ENCODE measurements at regions of chr5 and their contacts with region 1.

Region 1: GRCh38 chr5:170986598-170986997 is 124.8 kb downstream of the RANBP17 start:
- DNase-seq: no peak
- ATAC-seq: no peak
- H3K4me3 ChIP-seq: no peak overlapping the region
- H3K27ac ChIP-seq: no peak overlapping the region
- H3K4me1 ChIP-seq: no peaks in the 10 kb centered on the region
- H3K27me3 ChIP-seq: no peaks in the 10 kb centered on the region
- CTCF ChIP-seq: 0 out of 2 replicates have a peak, but pooled peaks have one; percentile 3
- EP300 ChIP-seq: no peak
- POLR2A ChIP-seq: no peak
- RAD21 ChIP-seq: no peak

Region 2: GRCh38 chr5:170769246-170769645 is 217.4 kb before region 1 on chr5:
- CTCF ChIA-PET with region 1: no interaction called
- POLR2A ChIA-PET with region 1: no interaction called
- in situ Hi-C with region 1: no loop called
- intact Hi-C with region 1: loop called (anchors 5 kb)
- DNase-seq: no peak
- ATAC-seq: no peak
- H3K4me3 ChIP-seq: no peak overlapping the region
- H3K27ac ChIP-seq: no peak overlapping the region
- H3K4me1 ChIP-seq: no peaks in the 10 kb centered on the region
- H3K27me3 ChIP-seq: peaks cover 1 to 5% of the 10 kb centered on the region in 2 experiments; a peak in 1 of 5 replicates
- CTCF ChIP-seq: no peak
- EP300 ChIP-seq: no peak
- POLR2A ChIP-seq: no peak
- RAD21 ChIP-seq: no peak

Region 3: DNA sequence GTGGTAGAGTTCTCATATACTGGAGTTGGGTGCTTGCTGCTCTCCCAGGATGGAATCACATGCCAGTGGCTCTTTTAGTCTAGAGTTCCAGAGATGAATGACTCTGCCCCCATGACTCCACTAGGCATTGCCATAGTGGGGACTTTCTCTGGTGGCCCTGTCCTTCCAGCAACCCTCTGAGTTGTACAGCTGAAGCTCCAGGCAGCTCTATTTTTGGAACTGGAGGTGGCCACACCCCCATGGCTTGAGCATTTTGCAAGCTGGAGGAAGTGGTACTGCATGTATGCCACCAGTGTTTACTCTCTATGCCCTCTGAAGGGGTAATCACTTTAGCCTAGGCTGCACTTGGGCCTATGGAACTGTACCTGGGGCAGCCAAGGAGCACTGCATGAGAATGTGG is 12.1 kb before region 1 on chr5:
- CTCF ChIA-PET with region 1: no interaction called
- POLR2A ChIA-PET with region 1: no interaction called
- in situ Hi-C with region 1: no loop called
- intact Hi-C with region 1: no loop called
- DNase-seq: no peak
- ATAC-seq: no peak
- H3K4me3 ChIP-seq: no peak overlapping the region
- H3K27ac ChIP-seq: no peak overlapping the region
- H3K4me1 ChIP-seq: no peaks in the 10 kb centered on the region
- H3K27me3 ChIP-seq: no peaks in the 10 kb centered on the region
- CTCF ChIP-seq: no peak
- EP300 ChIP-seq: no peak
- POLR2A ChIP-seq: no peak
- RAD21 ChIP-seq: no peak

Measured in HepG2 (cell line).